A549 (cell line): ENCODE measurements at regions of chr17 and their contacts with region 1.

Region 1: GRCh38 chr17:35747540-35748017 is 5.5 kb downstream of the GAS2L2 start:
- DNase-seq: peak; percentile 86 to 95
- ATAC-seq: peak; percentile 71 to 91
- H3K4me3 ChIP-seq: no peak overlapping the region
- H3K27ac ChIP-seq: no peak overlapping the region
- H3K4me1 ChIP-seq: peaks cover 12% of the 10 kb centered on the region; the same call in 2 of the 3 replicates
- CTCF ChIP-seq: peak; percentile 96
- EP300 ChIP-seq: no peak
- POLR2A ChIP-seq: no peak
- RAD21 ChIP-seq: peak; percentile 97 to 99

Region 2: DNA sequence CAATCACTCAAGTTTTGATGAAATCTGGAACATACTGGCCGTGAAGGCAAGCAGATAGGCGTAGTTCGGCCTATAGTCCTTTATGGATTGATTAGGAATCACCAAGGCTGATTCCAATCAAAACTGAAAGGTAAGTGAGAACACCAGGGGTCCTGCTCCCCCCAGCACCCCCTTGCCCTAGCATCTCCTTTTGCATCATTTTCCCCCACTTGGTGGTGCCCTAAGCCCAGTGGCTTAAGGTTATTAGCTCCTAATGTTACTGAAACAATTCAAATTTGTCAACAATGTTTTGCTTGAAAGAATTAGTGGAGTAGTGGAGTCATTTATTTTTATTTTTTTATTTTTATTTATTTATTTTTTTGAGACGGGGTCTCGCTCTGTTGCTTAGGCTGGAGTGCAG is 191.9 kb before region 1 on chr17:
- CTCF ChIA-PET with region 1: interaction called, 30 read pairs
- POLR2A ChIA-PET with region 1: no interaction called
- DNase-seq: no peak
- ATAC-seq: peak in 1 of 2 experiments; percentile 69; a peak in 3 of 6 replicates
- H3K4me3 ChIP-seq: no peak overlapping the region
- H3K27ac ChIP-seq: no peak overlapping the region
- H3K4me1 ChIP-seq: no peaks in the 10 kb centered on the region
- CTCF ChIP-seq: peak; percentile 40
- EP300 ChIP-seq: no peak
- POLR2A ChIP-seq: no peak
- RAD21 ChIP-seq: peak; percentile 46 to 53; a peak in 4 of 5 replicates

Region 3: DNA sequence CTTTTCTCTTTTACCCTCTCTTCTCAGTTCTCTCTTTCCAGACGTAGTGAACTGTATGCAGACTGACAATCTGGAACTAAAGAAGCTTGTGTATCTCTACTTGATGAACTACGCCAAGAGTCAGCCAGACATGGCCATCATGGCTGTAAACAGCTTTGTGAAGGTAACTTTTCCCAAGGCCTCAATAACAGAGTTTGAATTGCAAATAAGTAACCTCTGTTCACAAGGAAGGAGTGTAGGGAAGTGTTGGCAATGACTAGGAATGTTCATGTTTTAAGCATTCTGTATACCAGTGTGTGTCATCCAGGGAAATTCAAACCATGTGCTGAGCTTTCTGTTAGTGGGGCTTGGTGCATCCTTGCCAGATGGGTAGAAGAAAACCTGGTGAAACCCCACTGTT is 141.9 kb before region 1 on chr17:
- CTCF ChIA-PET with region 1: interaction called, 324 read pairs
- POLR2A ChIA-PET with region 1: no interaction called
- DNase-seq: no peak
- ATAC-seq: peak; percentile 44 to 64; a peak in 5 of 6 replicates
- H3K4me3 ChIP-seq: no peak overlapping the region
- H3K27ac ChIP-seq: no peak overlapping the region
- H3K4me1 ChIP-seq: no peaks in the 10 kb centered on the region
- CTCF ChIP-seq: no peak
- EP300 ChIP-seq: no peak
- POLR2A ChIP-seq: no peak
- RAD21 ChIP-seq: no peak

Region 4: GRCh38 chr17:35653619-35654361 is 93.8 kb before region 1 on chr17:
- CTCF ChIA-PET with region 1: interaction called, 13 read pairs
- POLR2A ChIA-PET with region 1: no interaction called
- DNase-seq: no peak
- ATAC-seq: no peak
- H3K4me3 ChIP-seq: no peak overlapping the region
- H3K27ac ChIP-seq: no peak overlapping the region
- H3K4me1 ChIP-seq: no peaks in the 10 kb centered on the region
- CTCF ChIP-seq: no peak
- EP300 ChIP-seq: no peak
- POLR2A ChIP-seq: no peak
- RAD21 ChIP-seq: no peak

Region 5: GRCh38 chr17:35695613-35696012 is 52.0 kb before region 1 on chr17:
- CTCF ChIA-PET with region 1: interaction called, 26 read pairs
- POLR2A ChIA-PET with region 1: no interaction called
- DNase-seq: no peak
- ATAC-seq: no peak
- H3K4me3 ChIP-seq: no peak overlapping the region
- H3K27ac ChIP-seq: no peak overlapping the region
- H3K4me1 ChIP-seq: no peaks in the 10 kb centered on the region
- CTCF ChIP-seq: no peak
- EP300 ChIP-seq: no peak
- POLR2A ChIP-seq: no peak
- RAD21 ChIP-seq: no peak

Region 6: GRCh38 chr17:36212966-36213365 is 465.4 kb after region 1 on chr17:
- CTCF ChIA-PET with region 1: no interaction called
- POLR2A ChIA-PET with region 1: no interaction called
- DNase-seq: no peak
- ATAC-seq: no peak
- H3K4me3 ChIP-seq: no peak overlapping the region
- H3K27ac ChIP-seq: no peak overlapping the region
- H3K4me1 ChIP-seq: no peaks in the 10 kb centered on the region
- CTCF ChIP-seq: no peak
- EP300 ChIP-seq: no peak
- POLR2A ChIP-seq: no peak
- RAD21 ChIP-seq: no peak